ENCODE measurements at regions of chr12 and their contacts with region 1.

Region 1: DNA sequence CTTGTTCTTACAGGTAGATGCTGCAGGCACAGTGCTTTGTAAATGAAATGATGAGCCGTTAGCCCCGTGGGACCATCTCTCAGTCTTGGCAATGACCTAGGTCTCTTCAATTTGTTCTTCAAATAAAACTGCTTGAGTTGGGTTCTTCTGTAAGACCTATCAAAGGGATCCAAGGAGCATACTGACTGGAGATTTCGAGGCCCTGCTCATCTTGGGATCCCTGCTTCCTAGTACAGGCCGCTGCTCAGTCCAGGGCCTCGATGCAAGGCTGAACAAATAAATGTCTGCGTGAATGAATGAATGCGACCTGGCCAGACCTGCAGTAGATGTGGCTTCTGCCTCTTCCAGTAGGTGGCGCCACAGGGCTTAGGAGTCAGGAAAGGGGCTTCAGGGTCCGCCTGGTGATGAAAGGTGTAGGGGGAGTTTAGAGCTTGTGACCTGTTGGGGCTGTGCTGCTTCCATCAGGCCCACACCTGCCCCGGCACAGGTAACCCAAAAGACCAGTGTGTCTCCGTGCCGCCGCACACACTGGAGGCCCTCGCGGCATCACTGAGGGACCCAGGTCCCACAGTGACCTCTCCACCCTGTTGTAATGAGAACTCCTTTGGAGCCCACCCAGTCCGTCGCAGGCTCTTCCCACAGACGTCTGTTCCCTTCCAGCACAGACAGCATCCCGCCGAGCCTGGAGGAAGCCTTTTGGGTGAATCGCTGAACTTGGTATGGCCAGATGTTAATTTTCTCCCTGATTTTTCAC is 4.4 kb downstream of the CACNA1C start:
- DNase-seq: peak; percentile 53 to 77
- ATAC-seq: peak; percentile 34 to 55 (median 46)
- H3K4me3 ChIP-seq: no peak overlapping the region
- H3K27ac ChIP-seq: no peak overlapping the region
- H3K4me1 ChIP-seq: no peaks in the 10 kb centered on the region
- H3K27me3 ChIP-seq: peaks cover 2 to 49% (median 19%) of the 10 kb centered on the region in 3 donors
- CTCF ChIP-seq: peak; percentile 64

Region 2: DNA sequence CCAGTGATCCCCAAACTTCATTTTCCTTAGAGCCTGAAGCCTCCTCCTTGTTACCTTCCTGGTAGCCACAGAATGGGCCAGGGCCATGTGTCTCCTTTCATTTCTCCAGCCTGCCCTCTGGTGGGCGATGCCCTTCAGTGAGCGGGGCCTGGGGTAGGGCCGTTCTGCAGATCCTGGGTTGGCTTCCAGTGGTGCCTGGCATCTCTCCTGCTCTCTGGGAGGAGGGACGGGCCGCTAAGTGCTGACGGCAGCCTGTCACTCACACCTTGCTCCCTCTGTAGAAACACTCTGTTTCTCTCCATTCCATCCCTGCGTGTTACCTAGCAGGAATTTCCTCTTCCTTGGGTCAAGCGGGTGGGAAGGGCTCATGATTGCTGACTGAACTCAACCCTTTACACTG is 227.6 kb after region 1 on chr12:
- intact Hi-C with region 1: loop called (anchors 5 to 10 kb)
- DNase-seq: peak; percentile 74 to 76
- ATAC-seq: peak; percentile 74 to 87 (median 86)
- H3K4me3 ChIP-seq: no peak overlapping the region
- H3K27ac ChIP-seq: no peak overlapping the region
- H3K4me1 ChIP-seq: no peaks in the 10 kb centered on the region
- H3K27me3 ChIP-seq: peaks cover 0 to 11% (median 0%) of the 10 kb centered on the region in 3 donors
- CTCF ChIP-seq: peak; percentile 54